ENCODE measurements at regions of chr6 and their contacts with region 1.

Region 1: DNA sequence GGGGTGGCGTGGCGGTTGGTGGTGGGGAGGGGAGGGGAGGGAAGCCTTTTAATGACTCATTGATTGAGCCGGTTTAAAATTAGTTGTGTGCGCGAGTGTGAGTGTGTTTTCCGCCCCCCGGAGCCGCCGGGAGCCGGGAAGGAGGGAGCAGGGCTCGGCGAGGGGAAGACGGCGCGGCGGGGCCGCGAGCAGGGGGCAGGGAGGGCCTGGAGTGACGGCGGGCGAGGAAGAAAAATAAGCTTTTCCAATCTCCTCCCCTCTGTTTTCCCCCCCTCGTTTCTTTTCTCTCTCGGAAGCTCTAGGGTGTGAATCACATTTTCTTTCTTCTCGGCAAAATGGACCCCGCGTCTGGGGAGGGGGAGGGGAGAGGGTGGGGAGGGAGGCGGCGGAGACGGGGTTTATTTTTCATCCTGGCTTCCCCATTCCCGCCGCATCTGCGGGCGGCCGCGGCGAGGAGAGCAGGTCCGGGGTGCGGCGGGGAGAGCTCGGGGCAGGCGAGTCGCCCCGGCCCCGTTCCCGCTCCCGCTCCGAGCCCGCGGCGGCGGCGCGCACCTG is 847 bp downstream of the BICRAL start:
- DNase-seq: peak; percentile 47
- H3K4me3 ChIP-seq: peak overlapping the region; percentile 72
- H3K27me3 ChIP-seq: no peaks in the 10 kb centered on the region
- CTCF ChIP-seq: no peak

Region 2: GRCh38 chr6:42758756-42759430 is 23.8 kb before region 1 on chr6:
- CTCF ChIA-PET with region 1: interaction called, 4 read pairs
- POLR2A ChIA-PET with region 1: interaction called, 10 read pairs
- DNase-seq: no peak
- H3K4me3 ChIP-seq: no peak overlapping the region
- H3K27me3 ChIP-seq: no peaks in the 10 kb centered on the region
- CTCF ChIP-seq: no peak

Region 3: DNA sequence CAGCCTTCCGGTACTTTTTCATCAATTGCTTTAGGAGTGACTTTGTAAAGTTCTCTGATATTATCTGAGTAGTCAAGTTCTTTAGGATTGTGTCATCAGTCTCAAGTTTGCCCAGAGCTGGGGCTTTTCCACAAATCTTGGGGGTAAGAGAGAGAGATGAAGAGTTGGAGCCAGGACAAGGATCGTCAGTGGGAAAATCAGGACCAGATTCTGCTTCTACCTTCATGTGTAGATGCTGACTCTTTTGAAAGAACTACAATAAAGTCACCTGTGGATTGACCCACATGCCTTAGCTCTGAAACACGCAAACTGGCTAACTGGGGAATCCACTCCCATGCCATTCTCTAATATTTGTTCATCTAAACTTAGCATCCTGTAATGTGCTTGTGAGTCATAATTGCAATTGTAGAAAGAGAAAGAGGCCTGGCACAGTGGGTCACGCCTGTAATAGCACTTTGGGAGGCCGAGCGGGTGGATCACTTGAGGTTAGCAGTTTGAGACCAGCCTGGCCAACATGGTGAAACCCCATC is 16.5 kb before region 1 on chr6:
- CTCF ChIA-PET with region 1: interaction called, 4 read pairs
- POLR2A ChIA-PET with region 1: interaction called, 18 read pairs
- DNase-seq: peak; percentile 41
- H3K4me3 ChIP-seq: no peak overlapping the region
- H3K27me3 ChIP-seq: no peaks in the 10 kb centered on the region
- CTCF ChIP-seq: no peak

Region 4: DNA sequence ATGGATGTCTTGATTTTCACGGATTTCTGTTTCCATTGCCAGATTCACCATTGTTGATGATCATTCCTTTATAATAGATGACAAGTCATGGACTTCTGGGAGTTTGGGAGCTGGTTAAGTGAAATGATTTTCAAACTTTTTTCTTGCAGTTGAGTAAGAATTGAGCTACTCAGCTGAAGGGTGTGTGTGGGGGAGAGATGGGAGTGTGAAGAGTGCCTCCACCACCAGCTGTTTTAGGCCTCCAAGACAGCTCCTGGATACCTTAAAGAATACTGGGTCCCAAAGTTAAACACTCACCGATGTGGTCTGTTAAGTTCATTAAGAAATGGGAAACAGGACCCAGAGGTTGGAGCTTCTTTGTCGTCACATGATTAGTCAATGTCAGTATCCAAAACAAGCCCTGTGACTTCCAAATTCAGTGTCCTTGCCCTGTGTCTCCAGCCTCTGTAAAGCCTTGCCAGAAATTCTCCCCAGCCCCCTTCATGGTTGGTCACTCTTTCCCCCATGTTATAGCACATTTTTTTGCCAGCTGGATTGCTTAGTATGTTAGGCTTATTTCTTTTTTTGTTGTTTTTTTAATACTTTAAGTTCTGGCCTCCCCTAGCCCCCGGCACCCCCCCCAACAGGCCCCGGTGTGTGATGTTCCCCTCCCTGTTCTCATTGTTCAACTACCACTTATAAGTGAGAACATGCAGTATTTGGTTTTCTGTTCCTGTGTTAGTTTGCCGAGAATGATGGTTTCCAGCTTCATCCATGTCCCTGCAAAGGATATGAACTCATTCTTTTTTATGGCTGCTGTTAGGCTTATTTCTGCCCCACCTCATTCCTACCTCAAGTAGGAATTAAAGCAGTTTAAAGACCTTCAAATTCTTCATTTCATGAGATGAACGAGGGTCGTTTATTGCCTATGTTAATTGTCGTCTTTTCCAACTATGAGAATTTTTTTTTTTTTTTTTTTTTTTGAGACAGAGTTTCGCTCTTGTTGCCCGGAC is 26.1 kb after region 1 on chr6:
- CTCF ChIA-PET with region 1: no interaction called
- POLR2A ChIA-PET with region 1: interaction called, 11 read pairs
- DNase-seq: no peak
- H3K4me3 ChIP-seq: no peak overlapping the region
- H3K27me3 ChIP-seq: no peaks in the 10 kb centered on the region
- CTCF ChIP-seq: no peak

Region 5: DNA sequence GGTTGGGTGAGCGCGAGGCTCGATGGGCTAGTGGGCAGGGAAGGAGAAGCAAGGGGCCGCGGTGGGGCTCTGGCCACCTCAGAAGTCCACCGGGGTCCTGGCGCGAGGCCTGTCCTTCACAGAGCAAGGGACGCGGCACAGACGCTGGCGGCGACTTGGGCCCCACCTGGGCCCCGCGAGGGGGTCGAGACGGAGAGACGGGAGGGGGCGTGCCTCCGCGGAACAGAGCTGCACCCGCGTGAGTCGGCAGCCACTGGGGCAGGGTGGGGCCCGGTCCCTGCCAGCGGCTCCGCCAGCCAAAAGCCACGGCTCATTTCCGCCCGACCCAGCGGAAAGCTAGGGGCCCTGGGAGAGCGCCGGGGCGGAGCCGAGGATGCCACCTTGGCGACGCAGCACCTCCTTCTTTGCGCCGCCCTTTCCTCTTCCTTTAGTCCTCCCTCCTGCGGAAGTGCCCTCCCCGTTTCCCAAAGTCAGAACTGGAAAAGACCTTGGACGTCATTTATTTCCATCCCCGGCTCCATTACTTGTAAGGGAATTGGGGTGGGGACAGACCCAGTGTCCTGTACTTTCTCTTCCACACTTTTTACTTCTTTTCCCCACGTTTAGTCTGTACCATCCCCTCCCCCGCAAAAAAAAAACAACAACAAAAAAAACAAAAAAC is 271.0 kb after region 1 on chr6 and contains the start of gene CUL7:
- CTCF ChIA-PET with region 1: no interaction called
- POLR2A ChIA-PET with region 1: no interaction called
- DNase-seq: peak; percentile 75
- H3K4me3 ChIP-seq: peak within 1 kb of the TSS; percentile 78
- H3K27me3 ChIP-seq: no peaks in the 10 kb centered on the region
- CTCF ChIP-seq: no peak
- polyA plus RNA-seq, gene CUL7: 31.8 and 50.7 TPM in 2 replicates

Region 6: DNA sequence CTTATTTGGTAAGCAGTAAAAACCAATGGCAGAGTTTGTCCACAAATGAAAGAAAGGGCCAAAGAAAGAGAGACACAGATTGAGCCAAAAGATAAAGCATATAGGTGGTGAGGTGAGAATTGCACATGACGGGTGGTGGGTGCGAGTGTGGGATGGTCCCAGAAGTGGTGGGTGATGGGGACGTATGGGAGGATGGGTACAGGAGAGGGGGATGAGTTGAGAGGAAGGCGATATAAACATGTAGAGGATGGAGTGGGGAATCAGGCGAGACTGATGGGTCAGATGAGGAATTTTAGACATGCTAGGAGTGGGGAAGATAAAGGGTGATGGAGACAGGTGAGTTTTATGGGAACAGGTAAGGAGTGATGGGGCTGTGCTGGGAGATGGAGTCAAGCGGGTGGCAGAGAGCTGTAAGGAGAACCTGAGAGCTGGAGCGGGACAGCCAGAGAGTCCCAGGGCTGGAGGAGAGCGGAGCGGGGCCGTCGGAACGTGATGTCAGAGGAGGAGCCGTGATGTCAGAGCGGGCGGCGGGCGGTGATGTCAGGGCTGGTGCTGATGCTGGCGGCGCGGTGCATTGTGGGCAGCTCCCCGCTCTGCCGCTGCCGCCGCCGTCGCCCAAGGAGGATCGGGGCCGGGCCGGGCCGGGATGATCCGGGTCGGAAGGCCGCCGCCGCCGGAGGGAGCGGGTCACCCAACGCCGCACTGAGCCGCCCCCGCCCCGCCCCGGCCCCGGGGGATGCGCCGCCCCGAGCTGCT is 460.4 kb after region 1 on chr6 and contains the start of gene TTBK1:
- CTCF ChIA-PET with region 1: no interaction called
- POLR2A ChIA-PET with region 1: no interaction called
- DNase-seq: no peak
- H3K4me3 ChIP-seq: no peak within 1 kb of the TSS
- H3K27me3 ChIP-seq: peaks cover 52% of the 10 kb centered on the region
- CTCF ChIP-seq: no peak
- polyA plus RNA-seq, gene TTBK1: 0.01 TPM in 1 of 2 replicates, not detected in the other

Measured in BJ (cell line).